ENCODE measurements at regions of chr17 and their contacts with region 1.

Region 1: GRCh38 chr17:69235338-69235930 is 6.8 kb upstream of the ABCA10 start:
- DNase-seq: peak; percentile 94
- H3K4me3 ChIP-seq: no peak overlapping the region
- H3K27ac ChIP-seq: peak overlapping the region in 1 of 2 donors; percentile 59
- H3K4me1 ChIP-seq: peaks cover 34% of the 10 kb centered on the region
- H3K27me3 ChIP-seq: no peaks in the 10 kb centered on the region
- CTCF ChIP-seq: peak; percentile 82 to 94 (median 91)
- POLR2A ChIP-seq: no peak

Region 2: DNA sequence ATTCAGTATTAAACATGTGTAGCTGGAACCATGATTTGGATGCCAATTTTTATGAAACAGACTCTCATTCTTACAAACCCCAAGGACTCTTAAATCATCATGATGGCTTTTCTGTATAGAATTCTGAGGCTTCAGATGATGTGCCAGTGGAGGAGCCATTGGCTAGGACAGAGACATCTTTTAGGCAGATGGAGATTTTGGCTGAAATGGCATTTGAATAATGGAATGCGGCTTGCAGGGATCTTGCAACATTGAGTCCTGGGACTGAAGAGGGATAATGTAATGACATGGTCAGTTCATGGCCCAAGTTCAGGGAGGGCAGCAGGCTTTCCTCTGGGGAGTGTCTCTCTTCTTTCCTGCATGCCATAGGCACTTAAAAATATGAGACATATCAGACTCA is 452.6 kb before region 1 on chr17:
- intact Hi-C with region 1: loop called (anchors 10 kb)
- DNase-seq: no peak
- H3K4me3 ChIP-seq: no peak overlapping the region
- H3K27ac ChIP-seq: no peak overlapping the region
- H3K4me1 ChIP-seq: peaks cover 15% of the 10 kb centered on the region
- H3K27me3 ChIP-seq: no peaks in the 10 kb centered on the region
- CTCF ChIP-seq: no peak
- POLR2A ChIP-seq: no peak

Region 3: DNA sequence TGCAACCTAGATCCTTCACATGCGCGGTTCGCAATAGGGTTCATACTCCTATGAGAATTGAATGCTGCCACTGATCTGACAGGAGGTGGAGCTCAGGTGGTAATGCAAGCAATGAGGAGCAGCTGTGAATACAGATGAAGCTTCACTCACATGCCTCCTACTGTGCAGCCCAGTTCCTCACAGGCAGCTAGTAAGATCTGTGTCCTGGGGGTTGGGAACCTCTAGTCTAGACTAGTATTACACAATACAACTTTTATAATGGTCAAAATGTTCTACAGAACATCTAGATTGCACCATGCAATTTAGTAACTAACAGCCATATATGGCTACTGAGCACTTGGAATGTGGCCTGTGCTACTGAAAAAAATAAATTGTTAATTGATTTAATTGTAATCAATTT is 64.8 kb after region 1 on chr17:
- intact Hi-C with region 1: no loop called
- DNase-seq: no peak
- H3K4me3 ChIP-seq: no peak overlapping the region
- H3K27ac ChIP-seq: no peak overlapping the region
- H3K4me1 ChIP-seq: no peaks in the 10 kb centered on the region
- H3K27me3 ChIP-seq: no peaks in the 10 kb centered on the region
- CTCF ChIP-seq: no peak
- POLR2A ChIP-seq: no peak